Heart right ventricle (tissue), 16 donors: ENCODE measurements at regions of chr11 and their contacts with region 1.

Region 1: DNA sequence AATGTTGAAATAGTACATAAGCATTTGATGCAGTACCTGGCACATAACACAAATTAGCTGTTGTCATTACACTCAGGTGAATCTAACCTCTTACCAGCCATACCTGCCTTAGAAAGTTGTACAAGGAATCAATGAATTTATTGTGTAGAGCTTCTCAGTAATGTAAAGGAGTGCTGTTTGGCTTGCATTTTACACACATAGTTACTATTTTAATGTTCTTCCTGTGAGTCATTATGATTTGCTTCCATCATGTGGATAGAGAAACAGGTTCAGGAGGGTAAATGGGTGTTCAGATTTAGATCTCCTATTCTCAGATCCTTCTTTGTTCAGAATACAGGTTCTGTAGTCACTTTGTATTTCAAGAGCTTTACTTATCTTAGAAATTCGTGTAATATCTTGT is 27.6 kb upstream of the RCE1 start:
- DNase-seq: no peak
- ATAC-seq: no peak
- H3K4me3 ChIP-seq: no peak overlapping the region
- H3K27ac ChIP-seq: no peak overlapping the region
- H3K4me1 ChIP-seq: no peaks in the 10 kb centered on the region
- H3K27me3 ChIP-seq: no peaks in the 10 kb centered on the region
- CTCF ChIP-seq: no peak

Region 2: GRCh38 chr11:66371627-66372415 is 443.8 kb before region 1 on chr11 and contains the start of gene SLC29A2:
- intact Hi-C with region 1: no loop called
- DNase-seq: peak; percentile 54 to 77
- ATAC-seq: peak; percentile 72 to 86 (median 78)
- H3K4me3 ChIP-seq: peak within 1 kb of the TSS; percentile 59 to 84 (median 78)
- H3K27ac ChIP-seq: peak within 1 kb of the TSS; percentile 79 to 90 (median 86)
- H3K4me1 ChIP-seq: peaks cover 2 to 45% (median 20%) of the 10 kb centered on the region in 9 donors
- H3K27me3 ChIP-seq: peaks cover 0 to 39% (median 15%) of the 10 kb centered on the region in 7 donors
- CTCF ChIP-seq: no peak
- total RNA-seq, gene SLC29A2: 7.8 to 28.0 (median 9.5) TPM

Region 3: DNA sequence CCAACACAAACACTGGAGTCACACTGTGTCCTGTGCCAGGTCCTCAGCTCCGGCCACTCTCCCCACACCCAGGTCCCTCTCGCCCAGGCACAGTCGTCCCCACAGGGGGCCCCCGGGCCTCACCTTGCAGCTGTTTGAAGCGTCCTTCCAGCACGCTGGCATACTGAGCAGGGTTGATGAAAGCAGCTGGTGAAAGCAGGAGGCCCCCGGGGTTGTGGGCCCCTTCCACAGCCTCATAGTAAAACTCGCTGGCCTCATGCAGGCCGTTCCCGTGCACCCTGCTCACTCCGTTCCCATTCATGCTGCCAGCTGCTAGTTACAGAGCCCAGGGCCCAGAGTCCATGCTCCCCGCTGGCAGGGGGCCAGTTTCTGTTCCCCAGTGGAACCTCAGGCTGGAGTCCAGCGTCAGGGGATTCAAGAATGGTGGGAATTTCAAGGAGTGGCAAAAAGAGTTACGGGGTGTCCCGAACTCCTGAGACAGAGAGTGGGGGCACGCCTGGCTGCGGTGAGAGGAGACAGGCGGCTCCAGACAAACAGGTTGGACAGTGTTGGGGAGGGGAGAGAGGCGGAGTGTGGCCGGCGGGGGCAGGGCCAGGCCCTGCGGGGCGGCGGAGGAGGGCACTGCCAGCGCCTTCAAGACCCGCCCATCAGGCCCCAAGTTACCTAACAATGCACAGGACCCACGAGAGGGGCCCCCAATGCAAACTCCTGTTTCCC is 97.2 kb before region 1 on chr11:
- intact Hi-C with region 1: loop called in 2 of 10 experiments (anchors 5 to 10 kb)
- DNase-seq: no peak
- ATAC-seq: no peak
- H3K4me3 ChIP-seq: no peak overlapping the region
- H3K27ac ChIP-seq: no peak overlapping the region
- H3K4me1 ChIP-seq: no peaks in the 10 kb centered on the region
- H3K27me3 ChIP-seq: peaks cover 0 to 17% (median 0%) of the 10 kb centered on the region in 7 donors
- CTCF ChIP-seq: no peak

Region 4: DNA sequence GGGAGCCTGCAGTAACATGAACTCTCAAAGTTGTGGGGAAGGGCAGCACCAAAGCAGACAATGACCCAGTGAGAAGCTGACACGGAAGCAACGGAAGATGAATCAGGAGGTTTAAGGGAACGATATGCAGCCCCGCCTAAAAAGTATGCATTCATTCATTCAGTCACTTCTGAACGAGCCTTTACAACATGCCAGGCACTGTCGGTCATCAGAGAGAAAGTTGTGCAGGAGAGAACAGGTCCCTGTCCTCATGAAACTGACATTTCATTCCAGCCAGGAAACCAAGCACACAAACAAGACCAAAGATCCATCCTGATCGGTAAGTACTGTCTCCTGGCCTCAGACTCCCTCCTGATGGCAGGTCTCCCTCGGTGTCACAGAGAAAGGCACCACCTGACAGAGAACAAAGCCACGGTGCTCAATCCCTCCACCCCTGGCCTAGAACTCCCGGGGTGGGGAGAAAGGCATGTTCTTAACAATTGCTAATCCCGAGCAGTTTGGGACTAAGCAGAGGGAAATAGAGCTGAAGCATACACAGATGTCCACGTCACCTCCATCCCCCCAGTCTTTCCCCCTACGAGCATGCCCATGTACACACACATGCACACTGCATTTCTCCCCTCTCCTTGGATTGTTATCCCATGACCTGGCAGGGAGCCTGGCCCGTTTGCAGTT is 90.6 kb after region 1 on chr11:
- intact Hi-C with region 1: no loop called
- DNase-seq: no peak
- ATAC-seq: peak in 1 of 8 donors; percentile 25
- H3K4me3 ChIP-seq: no peak overlapping the region
- H3K27ac ChIP-seq: no peak overlapping the region
- H3K4me1 ChIP-seq: peaks cover 0 to 13% (median 0%) of the 10 kb centered on the region in 9 donors
- H3K27me3 ChIP-seq: no peaks in the 10 kb centered on the region
- CTCF ChIP-seq: no peak

Region 5: GRCh38 chr11:66981976-66982578 is 166.4 kb after region 1 on chr11:
- intact Hi-C with region 1: no loop called
- DNase-seq: peak; percentile 84 to 93
- ATAC-seq: peak in 7 of 8 donors; percentile 52 to 88 (median 73)
- H3K4me3 ChIP-seq: no peak overlapping the region
- H3K27ac ChIP-seq: peak overlapping the region in 2 of 10 donors; percentile 8 to 17
- H3K4me1 ChIP-seq: peaks cover 2 to 28% (median 12%) of the 10 kb centered on the region in 9 donors
- H3K27me3 ChIP-seq: no peaks in the 10 kb centered on the region
- CTCF ChIP-seq: no peak